Psoas muscle (tissue), 8 donors: ENCODE measurements at regions of chr21 and their contacts with region 1.

Region 1: GRCh38 chr21:15742052-15742670 is 12.4 kb downstream of the USP25 start:
- DNase-seq: no peak
- ATAC-seq: no peak
- H3K4me3 ChIP-seq: no peak overlapping the region
- H3K27ac ChIP-seq: no peak overlapping the region
- H3K4me1 ChIP-seq: peaks cover 54% of the 10 kb centered on the region
- H3K27me3 ChIP-seq: no peaks in the 10 kb centered on the region
- CTCF ChIP-seq: no peak

Region 2: GRCh38 chr21:15472108-15473040 is 269.8 kb before region 1 on chr21:
- intact Hi-C with region 1: no loop called
- DNase-seq: no peak
- ATAC-seq: peak in 2 of 4 donors; percentile 91 to 92
- H3K4me3 ChIP-seq: no peak overlapping the region
- H3K27ac ChIP-seq: no peak overlapping the region
- H3K4me1 ChIP-seq: peaks cover 14% of the 10 kb centered on the region
- H3K27me3 ChIP-seq: no peaks in the 10 kb centered on the region
- CTCF ChIP-seq: no peak

Region 3: GRCh38 chr21:15688809-15689208 is 53.4 kb before region 1 on chr21:
- intact Hi-C with region 1: no loop called
- DNase-seq: no peak
- ATAC-seq: no peak
- H3K4me3 ChIP-seq: no peak overlapping the region
- H3K27ac ChIP-seq: no peak overlapping the region
- H3K4me1 ChIP-seq: no peaks in the 10 kb centered on the region
- H3K27me3 ChIP-seq: no peaks in the 10 kb centered on the region
- CTCF ChIP-seq: no peak

Region 4: DNA sequence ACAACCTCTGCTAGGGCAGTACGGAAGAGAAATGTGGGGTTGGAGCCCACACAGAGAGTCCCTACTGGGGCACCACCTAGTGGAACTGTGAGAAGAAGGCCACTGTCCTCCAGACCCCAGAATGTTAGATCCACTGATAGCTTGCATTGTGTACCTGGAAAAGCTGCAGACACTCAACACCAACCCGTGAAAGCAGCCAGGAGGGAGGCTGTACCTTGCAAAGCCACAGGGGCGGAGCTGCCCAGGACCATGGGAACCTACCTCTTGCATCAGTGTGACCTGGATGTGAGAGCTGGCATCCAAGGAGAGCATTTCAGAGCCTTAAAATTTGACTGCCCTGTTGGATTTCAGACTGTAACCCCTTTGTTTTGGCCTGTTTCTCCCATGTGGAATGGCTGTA is 73.1 kb after region 1 on chr21:
- intact Hi-C with region 1: loop called in 1 of 2 experiments (anchors 5 kb)
- DNase-seq: no peak
- ATAC-seq: no peak
- H3K4me3 ChIP-seq: no peak overlapping the region
- H3K27ac ChIP-seq: no peak overlapping the region
- H3K4me1 ChIP-seq: peaks cover 10% of the 10 kb centered on the region
- H3K27me3 ChIP-seq: no peaks in the 10 kb centered on the region
- CTCF ChIP-seq: no peak